Cardiac septum (tissue), 1 donor: ENCODE measurements at regions of chr4 and their contacts with region 1.

Region 1: DNA sequence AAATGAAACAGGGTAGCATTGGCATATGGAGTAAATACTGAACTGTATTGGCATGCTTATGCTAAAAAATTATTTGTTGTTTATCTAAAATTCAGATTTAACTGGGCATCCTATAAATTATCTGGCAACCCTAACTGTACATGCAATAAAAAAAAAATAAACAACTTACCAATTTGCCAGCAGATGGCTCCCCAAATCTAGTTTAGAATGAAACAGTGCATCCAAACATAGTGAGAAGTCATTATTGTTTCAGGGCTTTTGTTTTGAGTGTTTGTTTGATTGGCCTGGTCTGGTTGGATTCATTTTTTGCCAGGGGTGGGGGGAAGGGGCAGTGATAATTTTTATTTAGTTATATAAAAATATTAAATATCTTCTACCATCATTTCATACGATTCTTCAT is 12.8 kb upstream of the NSUN7 start:
- DNase-seq: no peak

Region 2: DNA sequence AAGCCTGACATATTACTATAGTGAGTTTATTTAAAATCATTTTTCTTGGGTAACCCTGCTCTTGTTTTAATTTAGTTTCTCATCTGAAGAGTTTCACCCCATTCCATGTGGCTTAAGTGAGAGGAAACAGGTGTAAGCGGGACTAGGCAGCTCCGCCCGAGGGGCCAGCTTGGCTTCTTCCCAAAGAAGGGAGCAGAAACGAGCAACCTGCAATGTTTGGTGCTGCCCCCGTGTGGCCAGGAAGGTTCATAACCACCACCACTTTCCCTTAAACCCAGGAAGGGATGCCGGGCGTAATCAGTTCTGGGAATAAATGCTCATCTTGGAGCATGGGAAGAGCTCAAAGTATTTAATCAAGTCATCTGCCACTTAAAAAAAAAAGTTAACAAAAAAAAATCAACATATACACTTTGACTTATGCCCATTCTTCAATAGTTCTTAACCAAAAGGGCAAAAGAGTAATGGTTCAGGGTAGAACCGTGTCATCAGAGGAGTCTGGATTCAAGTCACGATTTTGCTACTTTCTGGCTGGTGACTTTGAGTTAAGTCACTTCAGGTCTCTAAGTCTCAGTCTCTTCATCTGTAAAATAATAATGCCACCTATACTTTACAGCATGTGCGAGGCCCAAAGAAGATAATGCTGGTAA is 160.8 kb after region 1 on chr4:
- intact Hi-C with region 1: loop called (anchors 5 kb)
- DNase-seq: no peak